Endothelial cell of umbilical vein (primary cell): ENCODE measurements at regions of chr1 and their contacts with region 1.

Region 1: DNA sequence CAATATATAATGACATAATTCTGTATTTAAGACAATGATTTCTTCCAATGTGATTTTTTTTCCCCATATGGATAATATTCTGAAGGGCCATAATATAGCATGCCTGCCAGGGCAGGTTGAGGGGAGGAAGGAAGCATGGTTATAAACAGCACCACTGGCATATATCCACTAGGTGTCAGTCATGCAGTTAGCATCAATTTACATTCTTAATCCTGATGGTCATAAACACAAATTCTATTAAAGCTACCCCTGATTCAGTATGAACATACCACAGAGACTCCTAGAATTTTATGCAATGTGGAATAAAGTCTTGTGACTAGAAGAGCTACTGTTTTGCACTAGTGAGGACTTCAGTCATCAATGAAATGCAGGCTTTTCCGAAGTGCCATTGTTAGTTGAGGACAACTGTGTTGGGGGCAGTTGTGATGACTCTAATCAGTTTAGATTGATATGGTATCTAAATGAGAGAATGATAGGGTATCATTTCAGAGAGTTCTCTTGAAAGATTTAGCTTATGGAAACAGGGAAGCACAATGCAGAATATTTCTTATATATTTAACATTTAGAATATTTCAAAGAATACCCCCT is 342.7 kb upstream of the NR5A2 start:
- DNase-seq: peak; percentile 88
- H3K4me3 ChIP-seq: no peak overlapping the region
- H3K27ac ChIP-seq: peak overlapping the region; percentile 69
- H3K4me1 ChIP-seq: peaks cover 46% of the 10 kb centered on the region
- H3K27me3 ChIP-seq: no peaks in the 10 kb centered on the region
- CTCF ChIP-seq: peak; percentile 64 to 74
- POLR2A ChIP-seq: no peak

Region 2: GRCh38 chr1:199742547-199742946 is 57.8 kb after region 1 on chr1:
- CTCF ChIA-PET with region 1: interaction called, 13 read pairs
- POLR2A ChIA-PET with region 1: interaction called, 4 read pairs
- dilution Hi-C with region 1: no loop called
- intact Hi-C with region 1: no loop called
- DNase-seq: peak; percentile 86
- H3K4me3 ChIP-seq: no peak overlapping the region
- H3K27ac ChIP-seq: peak overlapping the region; percentile 81
- H3K4me1 ChIP-seq: peaks cover 16% of the 10 kb centered on the region
- H3K27me3 ChIP-seq: no peaks in the 10 kb centered on the region
- CTCF ChIP-seq: no peak
- POLR2A ChIP-seq: no peak

Region 3: GRCh38 chr1:199909135-199909534 is 224.4 kb after region 1 on chr1:
- CTCF ChIA-PET with region 1: interaction called, 5 read pairs
- POLR2A ChIA-PET with region 1: no interaction called
- dilution Hi-C with region 1: no loop called
- intact Hi-C with region 1: loop called (anchors 2 kb)
- DNase-seq: peak; percentile 55
- H3K4me3 ChIP-seq: no peak overlapping the region
- H3K27ac ChIP-seq: no peak overlapping the region
- H3K4me1 ChIP-seq: no peaks in the 10 kb centered on the region
- H3K27me3 ChIP-seq: no peaks in the 10 kb centered on the region
- CTCF ChIP-seq: no peak
- POLR2A ChIP-seq: no peak

Region 4: GRCh38 chr1:200048218-200048617 is 363.4 kb after region 1 on chr1:
- CTCF ChIA-PET with region 1: interaction called, 16 read pairs
- POLR2A ChIA-PET with region 1: no interaction called
- dilution Hi-C with region 1: no loop called
- intact Hi-C with region 1: no loop called
- DNase-seq: no peak
- H3K4me3 ChIP-seq: no peak overlapping the region
- H3K27ac ChIP-seq: no peak overlapping the region
- H3K4me1 ChIP-seq: no peaks in the 10 kb centered on the region
- H3K27me3 ChIP-seq: peaks cover 0 to 32% of the 10 kb centered on the region in 2 experiments
- CTCF ChIP-seq: no peak
- POLR2A ChIP-seq: no peak

Region 5: GRCh38 chr1:200131616-200132015 is 446.8 kb after region 1 on chr1:
- CTCF ChIA-PET with region 1: interaction called, 14 read pairs
- POLR2A ChIA-PET with region 1: no interaction called
- dilution Hi-C with region 1: no loop called
- intact Hi-C with region 1: no loop called
- DNase-seq: peak; percentile 14
- H3K4me3 ChIP-seq: no peak overlapping the region
- H3K27ac ChIP-seq: no peak overlapping the region
- H3K4me1 ChIP-seq: no peaks in the 10 kb centered on the region
- H3K27me3 ChIP-seq: no peaks in the 10 kb centered on the region
- CTCF ChIP-seq: no peak
- POLR2A ChIP-seq: no peak

Region 6: GRCh38 chr1:200279810-200280411 is 595.1 kb after region 1 on chr1:
- CTCF ChIA-PET with region 1: interaction called, 138 read pairs
- POLR2A ChIA-PET with region 1: no interaction called
- dilution Hi-C with region 1: no loop called
- intact Hi-C with region 1: loop called (anchors 1 kb)
- DNase-seq: peak; percentile 74
- H3K4me3 ChIP-seq: no peak overlapping the region
- H3K27ac ChIP-seq: no peak overlapping the region
- H3K4me1 ChIP-seq: no peaks in the 10 kb centered on the region
- H3K27me3 ChIP-seq: peaks cover 3 to 5% of the 10 kb centered on the region in 2 experiments
- CTCF ChIP-seq: peak; percentile 66 to 69
- POLR2A ChIP-seq: no peak

Region 7: GRCh38 chr1:200510228-200510623 is 825.4 kb after region 1 on chr1:
- CTCF ChIA-PET with region 1: interaction called, 8 read pairs
- POLR2A ChIA-PET with region 1: no interaction called
- dilution Hi-C with region 1: no loop called
- intact Hi-C with region 1: loop called (anchors 1 kb)
- DNase-seq: peak; percentile 79
- H3K4me3 ChIP-seq: no peak overlapping the region
- H3K27ac ChIP-seq: no peak overlapping the region
- H3K4me1 ChIP-seq: no peaks in the 10 kb centered on the region
- H3K27me3 ChIP-seq: peaks cover 8 to 12% of the 10 kb centered on the region in 2 experiments
- CTCF ChIP-seq: peak; percentile 70 to 77
- POLR2A ChIP-seq: no peak